ENCODE measurements at regions of chr9 and their contacts with region 1.

Region 1: DNA sequence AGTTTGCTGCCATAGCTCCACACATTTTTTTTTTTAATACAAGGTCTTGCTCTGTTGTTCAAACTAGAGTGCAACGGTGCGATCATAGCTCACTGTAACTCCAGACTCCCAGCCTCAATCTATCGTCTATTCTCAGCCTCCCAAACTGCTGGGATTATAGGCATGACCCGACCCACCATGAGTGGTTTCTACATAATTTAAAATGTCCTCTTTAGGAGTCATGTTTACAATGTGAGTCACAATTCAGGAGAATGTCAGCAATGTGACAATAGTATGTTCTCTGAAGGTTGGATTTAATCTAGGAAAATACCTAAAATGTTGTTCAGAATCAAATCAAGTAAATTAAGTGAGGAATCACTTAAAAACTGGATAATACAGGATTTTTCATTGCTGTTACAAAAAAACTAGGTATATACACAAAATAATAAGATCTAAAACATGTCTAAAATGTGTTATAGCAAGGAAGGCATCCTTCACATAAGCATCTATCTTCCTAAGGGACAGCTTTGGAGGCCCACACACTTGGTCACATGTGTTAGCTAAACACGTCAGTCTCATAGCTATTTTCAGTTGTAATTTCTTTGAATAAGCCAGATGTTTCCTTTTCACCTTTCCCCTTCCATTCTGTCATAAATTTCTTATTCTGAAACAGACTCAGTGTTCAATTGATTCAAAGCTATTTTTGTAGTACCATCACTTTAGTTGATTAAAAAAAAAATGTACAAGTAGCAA is 30.0 kb upstream of the ELAVL2 start:
- DNase-seq: no peak

Region 2: DNA sequence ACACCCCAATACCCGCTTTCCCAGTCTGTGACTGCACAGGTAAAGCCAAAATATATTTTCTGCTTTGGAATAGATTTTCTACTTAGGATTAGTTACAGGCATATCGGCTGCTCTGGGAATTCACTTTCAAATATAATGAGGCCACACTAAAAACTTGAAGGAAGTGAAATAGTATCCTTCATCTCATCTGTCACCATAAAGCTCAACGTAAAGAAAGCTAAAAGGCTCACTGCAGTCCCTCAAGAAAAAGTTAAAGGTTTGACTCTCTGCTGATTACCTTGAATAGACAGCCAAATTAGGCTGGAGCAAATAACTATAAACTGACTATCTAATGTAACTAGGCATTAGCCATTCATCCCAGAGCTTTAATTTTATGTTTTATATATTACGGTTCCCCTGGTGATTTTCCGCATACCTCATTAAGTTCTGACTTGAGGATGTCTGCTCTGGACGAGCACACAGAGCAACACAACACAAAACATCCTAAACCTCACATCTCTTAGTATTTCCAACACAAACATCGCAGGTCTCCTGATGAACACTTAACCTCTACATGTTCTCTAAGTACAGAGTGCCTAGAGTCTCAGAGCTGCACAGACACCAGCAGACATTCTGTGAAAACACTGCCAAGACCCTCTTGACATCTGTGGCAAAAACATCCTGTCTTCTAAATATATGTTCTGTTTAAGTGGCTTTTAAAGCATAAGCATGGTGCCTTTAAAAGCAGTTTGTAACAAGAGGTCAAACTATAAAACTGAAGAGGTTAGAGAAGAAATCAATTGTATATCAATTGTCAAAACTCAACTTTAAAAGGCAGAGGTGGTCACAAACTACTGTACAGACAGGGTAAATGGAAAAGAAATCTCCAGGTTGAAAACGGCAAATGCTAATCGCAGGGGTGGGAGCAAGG is 65.4 kb before region 1 on chr9:
- intact Hi-C with region 1: no loop called
- DNase-seq: no peak

Region 3: DNA sequence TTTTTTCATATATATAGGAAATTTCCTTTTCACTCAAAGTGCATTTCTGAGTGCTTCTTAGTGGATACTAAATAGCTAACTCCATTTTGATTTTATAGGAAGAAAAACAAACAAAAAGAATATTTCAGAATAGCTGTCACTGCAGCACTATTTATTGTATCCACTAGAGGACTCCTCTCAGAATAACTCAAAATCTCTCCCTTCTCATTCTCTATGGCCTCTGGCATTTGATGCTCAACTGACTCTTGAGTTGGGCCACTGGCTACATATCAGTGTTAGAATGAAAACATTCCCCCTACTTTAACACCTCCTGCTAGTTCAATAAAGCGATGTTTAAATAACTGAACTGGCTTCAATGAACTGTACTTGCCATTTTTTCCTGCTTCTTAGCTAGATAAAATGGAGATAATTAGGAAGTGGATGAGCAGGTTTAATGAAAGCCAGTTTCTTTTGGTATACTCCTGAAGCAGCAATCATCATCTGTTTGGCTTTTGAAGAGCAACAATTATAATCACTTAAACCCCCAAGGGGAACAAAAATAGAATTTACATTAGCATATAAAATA is 13.4 kb before region 1 on chr9:
- intact Hi-C with region 1: loop called in 1 of 2 experiments (anchors 1 kb)
- DNase-seq: no peak